Dendritic cell treated with granulocyte-macrophage colony-stimulating factor and Interleukin-4, amounts not matched to agents 40 ng/mL and 50 ng/mL, for 4 days (primary cell): ENCODE measurements at regions of chr19 and their contacts with region 1.

Region 1: GRCh38 chr19:12881172-12881808 is at the start of gene DNASE2:
- H3K4me3 Mint-ChIP-seq: peak within 1 kb of the TSS; percentile 75
- H3K27ac Mint-ChIP-seq: peak within 1 kb of the TSS; percentile 97
- H3K4me1 Mint-ChIP-seq: peaks cover 67% of the 10 kb centered on the region
- H3K27me3 Mint-ChIP-seq: peaks cover 9% of the 10 kb centered on the region

Region 2: GRCh38 chr19:12603714-12604113 is 277.6 kb before region 1 on chr19:
- intact Hi-C with region 1: no loop called
- H3K4me3 Mint-ChIP-seq: no peak overlapping the region
- H3K27ac Mint-ChIP-seq: no peak overlapping the region
- H3K4me1 Mint-ChIP-seq: peaks cover 10% of the 10 kb centered on the region
- H3K27me3 Mint-ChIP-seq: no peaks in the 10 kb centered on the region

Region 3: DNA sequence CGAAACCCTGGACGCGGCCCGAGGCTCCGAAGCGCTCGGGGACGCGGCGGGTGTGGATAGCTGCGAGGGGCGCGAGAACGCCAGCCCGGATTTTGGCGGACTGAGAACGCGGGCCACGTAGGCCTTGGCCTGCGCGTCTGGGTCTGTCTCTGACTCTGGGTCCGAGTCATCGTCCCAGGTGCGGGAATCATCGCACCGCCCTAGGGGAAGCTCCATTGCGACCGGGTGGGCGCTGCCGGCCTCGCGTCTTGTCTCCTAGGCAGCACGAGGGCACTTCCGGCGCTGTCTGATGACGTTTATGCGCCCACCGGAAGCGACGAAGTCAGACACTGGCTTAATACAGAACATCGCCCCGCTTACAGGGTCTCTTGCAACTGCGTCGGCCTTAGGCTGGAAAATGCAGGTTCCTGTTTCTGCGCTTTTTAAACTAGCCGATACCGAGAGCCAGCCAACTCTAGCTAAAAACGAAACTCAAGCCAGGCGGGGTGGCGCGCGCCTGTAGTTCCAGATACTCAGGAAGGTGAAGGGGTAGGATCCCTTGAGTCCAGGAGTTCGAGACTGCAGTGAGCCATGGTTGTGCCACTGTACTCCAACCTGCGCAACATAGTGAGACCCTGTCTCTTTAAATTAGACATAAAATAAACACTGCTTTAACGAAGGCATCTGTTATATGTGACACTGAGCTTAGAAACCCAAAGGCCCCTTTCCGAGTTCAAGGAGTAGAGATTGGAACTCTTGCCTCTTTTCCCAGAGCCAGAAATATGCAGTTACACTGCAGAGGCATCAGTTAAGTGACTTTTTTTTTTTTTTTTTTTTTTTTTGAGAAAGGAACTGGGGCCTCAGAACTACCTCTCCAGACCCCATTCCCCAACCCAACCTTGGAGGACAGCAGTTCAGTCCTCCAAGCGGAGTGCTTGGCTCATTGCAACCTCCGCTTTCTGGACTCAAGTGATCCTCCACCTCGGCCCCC is 184.6 kb before region 1 on chr19 and contains the start of gene FBXW9:
- intact Hi-C with region 1: no loop called
- H3K4me3 Mint-ChIP-seq: peak within 1 kb of the TSS; percentile 82
- H3K27ac Mint-ChIP-seq: peak within 1 kb of the TSS; percentile 93
- H3K4me1 Mint-ChIP-seq: peaks cover 10% of the 10 kb centered on the region
- H3K27me3 Mint-ChIP-seq: no peaks in the 10 kb centered on the region

Region 4: GRCh38 chr19:12965017-12965811 is 83.9 kb after region 1 on chr19:
- intact Hi-C with region 1: loop called (anchors 2 kb)
- H3K4me3 Mint-ChIP-seq: peak overlapping the region; percentile 87
- H3K27ac Mint-ChIP-seq: peak overlapping the region; percentile 73
- H3K4me1 Mint-ChIP-seq: peaks cover 12% of the 10 kb centered on the region
- H3K27me3 Mint-ChIP-seq: peaks cover 5% of the 10 kb centered on the region